ENCODE measurements at regions of chr7 and their contacts with region 1.

Region 1: GRCh38 chr7:100803398-100804233 is 23.7 kb downstream of the EPHB4 start:
- DNase-seq: peak; percentile 82
- H3K4me3 ChIP-seq: peak overlapping the region in 1 of 3 experiments; percentile 3
- H3K27ac ChIP-seq: peak overlapping the region; percentile 9
- H3K4me1 ChIP-seq: peaks cover 45% of the 10 kb centered on the region
- H3K27me3 ChIP-seq: no peaks in the 10 kb centered on the region
- CTCF ChIP-seq: no peak

Region 2: DNA sequence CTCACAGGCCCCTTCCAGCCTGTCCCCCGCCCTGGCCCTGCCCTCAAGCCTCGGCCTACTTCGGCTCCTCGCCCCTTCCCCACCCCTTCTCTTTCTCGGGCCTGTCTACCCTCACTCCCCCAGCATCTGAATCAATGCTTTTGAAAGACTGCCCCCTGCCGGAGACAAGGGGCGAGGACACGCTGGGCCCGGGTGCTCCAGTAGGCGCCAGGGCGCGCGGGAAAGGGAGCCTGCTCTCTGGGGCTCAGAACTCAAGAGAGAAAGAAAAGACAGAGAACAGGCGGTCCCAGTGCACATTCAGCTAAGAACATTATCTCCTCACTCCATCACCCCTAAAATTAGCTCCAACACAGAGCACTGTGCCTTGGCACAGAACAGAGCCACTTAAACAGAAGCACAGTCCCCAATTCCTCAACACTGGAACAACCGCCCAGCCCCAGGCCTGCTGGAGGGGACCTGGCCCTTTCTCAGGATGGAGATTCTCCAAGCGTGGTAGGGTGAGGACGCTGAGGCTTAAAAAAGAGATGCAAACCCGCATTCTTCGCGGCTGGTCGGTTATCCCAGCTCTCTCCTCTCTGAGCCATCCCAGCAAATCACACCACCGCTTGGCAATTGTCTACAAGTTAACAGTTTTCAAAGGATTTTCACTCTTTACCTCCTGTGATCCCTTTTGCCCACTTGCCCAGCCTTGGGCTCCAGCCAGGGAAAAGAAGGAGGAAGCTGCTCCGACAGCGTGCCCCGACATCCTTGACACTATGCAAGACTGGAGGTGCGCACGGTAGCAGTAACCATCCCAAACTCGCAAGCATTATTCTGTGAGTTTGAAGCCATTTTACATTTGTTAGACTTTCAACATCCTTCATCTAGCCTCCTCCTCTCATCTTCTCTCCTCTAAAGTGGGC is 111.7 kb before region 1 on chr7:
- CTCF ChIA-PET with region 1: no interaction called
- dilution Hi-C with region 1: no loop called
- in situ Hi-C with region 1: no loop called
- intact Hi-C with region 1: no loop called
- DNase-seq: peak; percentile 50
- H3K4me3 ChIP-seq: peak overlapping the region in 2 of 3 experiments; percentile 86 to 95
- H3K27ac ChIP-seq: no peak overlapping the region
- H3K4me1 ChIP-seq: peaks cover 29% of the 10 kb centered on the region
- H3K27me3 ChIP-seq: no peaks in the 10 kb centered on the region
- CTCF ChIP-seq: peak; percentile 89 to 93

Region 3: DNA sequence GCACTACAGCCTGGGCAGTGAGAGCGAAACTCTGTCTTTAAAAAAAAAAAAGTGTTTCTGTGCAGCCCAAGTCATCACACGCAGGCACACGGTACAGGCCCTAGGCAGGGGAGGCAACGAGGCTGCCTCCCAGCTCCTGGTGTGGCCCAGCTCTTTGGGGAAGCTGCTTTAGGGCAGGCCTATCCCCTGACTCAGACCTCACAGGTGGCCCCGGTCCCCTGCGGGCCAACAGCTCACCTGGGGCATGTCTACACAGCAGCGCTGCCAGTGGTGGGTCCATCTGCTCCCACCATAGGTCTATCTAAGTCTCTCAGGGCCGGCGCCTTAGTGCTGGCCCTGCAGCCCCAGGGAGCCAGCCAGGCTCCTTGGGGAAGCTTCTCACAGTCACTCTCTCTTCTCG is 38.8 kb before region 1 on chr7:
- CTCF ChIA-PET with region 1: no interaction called
- dilution Hi-C with region 1: loop called (anchors 5 kb)
- in situ Hi-C with region 1: no loop called
- intact Hi-C with region 1: no loop called
- DNase-seq: no peak
- H3K4me3 ChIP-seq: no peak overlapping the region
- H3K27ac ChIP-seq: no peak overlapping the region
- H3K4me1 ChIP-seq: no peaks in the 10 kb centered on the region
- H3K27me3 ChIP-seq: no peaks in the 10 kb centered on the region
- CTCF ChIP-seq: no peak

Region 4: DNA sequence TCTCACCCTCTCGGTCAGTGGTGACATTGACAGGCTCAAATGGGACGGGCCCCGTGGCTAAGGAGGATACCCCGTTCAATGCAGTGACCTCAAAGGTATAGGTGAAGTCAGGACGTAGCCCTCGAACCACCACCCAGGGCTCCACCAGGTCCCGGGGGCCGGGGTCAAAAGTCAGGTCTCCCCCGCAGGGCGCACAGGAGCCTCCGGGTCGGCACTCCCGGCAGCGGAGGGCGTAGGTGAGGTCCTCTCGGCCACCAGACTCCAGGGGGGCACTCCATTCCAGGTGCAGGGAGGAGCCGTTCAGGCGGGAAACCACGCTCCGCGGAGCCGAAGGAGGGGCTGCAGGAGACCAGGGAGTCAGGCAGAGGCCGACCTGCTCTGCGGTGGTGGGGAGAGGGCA is 15.9 kb after region 1 on chr7:
- CTCF ChIA-PET with region 1: interaction called, 15 read pairs
- dilution Hi-C with region 1: no loop called
- in situ Hi-C with region 1: no loop called
- intact Hi-C with region 1: no loop called
- DNase-seq: no peak
- H3K4me3 ChIP-seq: no peak overlapping the region
- H3K27ac ChIP-seq: no peak overlapping the region
- H3K4me1 ChIP-seq: peaks cover 9% of the 10 kb centered on the region
- H3K27me3 ChIP-seq: no peaks in the 10 kb centered on the region
- CTCF ChIP-seq: no peak

Region 5: GRCh38 chr7:100827330-100828227 is 24.0 kb after region 1 on chr7 and contains the start of gene EPHB4:
- CTCF ChIA-PET with region 1: interaction called, 4 read pairs
- dilution Hi-C with region 1: no loop called
- in situ Hi-C with region 1: no loop called
- intact Hi-C with region 1: loop called (anchors 1 kb)
- DNase-seq: peak; percentile 79
- H3K4me3 ChIP-seq: peak within 1 kb of the TSS; percentile 70 to 86 (median 72)
- H3K27ac ChIP-seq: peak within 1 kb of the TSS; percentile 39
- H3K4me1 ChIP-seq: peaks cover 7% of the 10 kb centered on the region
- H3K27me3 ChIP-seq: no peaks in the 10 kb centered on the region
- CTCF ChIP-seq: no peak
- total RNA-seq, gene EPHB4: 75.0 to 81.0 TPM